Esophagus squamous epithelium (tissue), 5 donors: ENCODE measurements at regions of chr12 and their contacts with region 1.

Region 1: DNA sequence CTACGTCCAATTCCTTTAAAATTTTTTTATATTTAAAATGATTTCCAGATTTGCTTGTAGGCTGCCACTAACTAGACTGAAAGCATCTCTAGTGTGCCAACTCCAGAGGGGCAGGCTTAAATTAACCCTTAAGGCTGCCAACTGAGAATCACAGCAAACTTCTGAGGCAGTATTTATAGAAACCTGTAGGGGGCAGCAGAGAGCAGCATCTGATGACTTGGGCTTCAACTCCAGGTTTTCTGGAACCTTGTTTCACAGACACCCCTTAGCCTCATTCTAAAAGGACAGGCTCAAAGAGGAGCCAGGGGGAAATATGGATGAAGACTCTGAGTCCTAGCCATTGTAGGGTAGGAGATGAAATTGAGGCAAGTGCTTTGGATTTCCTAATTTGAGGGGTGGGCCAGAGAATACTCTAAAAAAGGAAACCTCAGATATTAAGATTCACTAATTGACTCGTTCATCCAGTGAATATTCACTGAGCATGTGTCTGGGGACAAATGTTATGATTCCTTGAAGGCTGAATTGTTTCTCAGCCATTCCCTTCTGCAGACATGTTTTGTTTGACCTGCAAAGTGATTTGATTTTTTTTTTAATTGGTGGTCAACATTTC is 63.3 kb upstream of the HSPB8 start:
- DNase-seq: no peak
- H3K4me3 ChIP-seq: no peak overlapping the region
- H3K27ac ChIP-seq: no peak overlapping the region
- H3K4me1 ChIP-seq: peaks cover 0 to 12% (median 6%) of the 10 kb centered on the region in 3 donors
- H3K27me3 ChIP-seq: peaks cover 0 to 4% (median 0%) of the 10 kb centered on the region in 4 donors
- CTCF ChIP-seq: peak; percentile 65 to 93 (median 88)
- POLR2A ChIP-seq: no peak

Region 2: DNA sequence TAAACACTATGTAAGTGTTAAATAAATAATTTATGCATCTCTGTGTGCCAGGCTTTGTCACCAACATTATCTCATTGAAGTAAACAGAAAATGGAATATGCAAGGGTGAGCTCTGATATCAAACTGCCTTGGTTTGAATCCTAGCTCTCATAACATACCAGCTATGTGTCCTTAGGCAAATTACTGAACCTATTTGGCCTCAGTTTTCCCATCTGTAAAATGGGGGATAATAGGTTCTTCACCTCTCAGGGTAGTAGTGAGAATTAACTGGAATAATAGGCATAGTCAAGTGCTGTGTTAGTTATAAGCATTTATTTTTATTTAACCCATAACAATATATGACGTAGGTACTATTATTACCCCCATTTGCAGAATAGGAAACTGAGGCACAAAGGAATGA is 324.8 kb before region 1 on chr12:
- intact Hi-C with region 1: no loop called
- DNase-seq: no peak
- H3K4me3 ChIP-seq: no peak overlapping the region
- H3K27ac ChIP-seq: no peak overlapping the region
- H3K4me1 ChIP-seq: no peaks in the 10 kb centered on the region
- H3K27me3 ChIP-seq: no peaks in the 10 kb centered on the region
- CTCF ChIP-seq: no peak
- POLR2A ChIP-seq: no peak

Region 3: GRCh38 chr12:119412811-119413794 is 297.7 kb after region 1 on chr12:
- intact Hi-C with region 1: loop called (anchors 5 kb)
- DNase-seq: no peak
- H3K4me3 ChIP-seq: no peak overlapping the region
- H3K27ac ChIP-seq: peak overlapping the region in 1 of 4 donors; percentile 6
- H3K4me1 ChIP-seq: peaks cover 0 to 8% (median 0%) of the 10 kb centered on the region in 3 donors
- H3K27me3 ChIP-seq: peaks cover 0 to 7% (median 0%) of the 10 kb centered on the region in 4 donors
- CTCF ChIP-seq: peak; percentile 19 to 88 (median 82)
- POLR2A ChIP-seq: no peak